Activated CD4-positive, alpha-beta memory T cell treated with anti-CD3 and anti-CD28 coated beads for 36 hours (primary cell): ENCODE measurements at regions of chr20 and their contacts with region 1.

Region 1: GRCh38 chr20:53149148-53149889 is 177.2 kb downstream of the TSHZ2 start:
- DNase-seq: no peak
- H3K4me3 Mint-ChIP-seq: no peak overlapping the region
- H3K27ac Mint-ChIP-seq: no peak overlapping the region
- H3K4me1 Mint-ChIP-seq: peaks cover 54% of the 10 kb centered on the region
- H3K27me3 Mint-ChIP-seq: no peaks in the 10 kb centered on the region

Region 2: GRCh38 chr20:52410182-52410647 is 739.1 kb before region 1 on chr20:
- CTCF ChIA-PET with region 1: no interaction called
- POLR2A ChIA-PET with region 1: no interaction called
- intact Hi-C with region 1: loop called (anchors 5 kb)
- DNase-seq: peak; percentile 65
- H3K4me3 Mint-ChIP-seq: peak overlapping the region; percentile 38
- H3K27ac Mint-ChIP-seq: peak overlapping the region; percentile 63
- H3K4me1 Mint-ChIP-seq: peaks cover 64% of the 10 kb centered on the region
- H3K27me3 Mint-ChIP-seq: no peaks in the 10 kb centered on the region

Region 3: DNA sequence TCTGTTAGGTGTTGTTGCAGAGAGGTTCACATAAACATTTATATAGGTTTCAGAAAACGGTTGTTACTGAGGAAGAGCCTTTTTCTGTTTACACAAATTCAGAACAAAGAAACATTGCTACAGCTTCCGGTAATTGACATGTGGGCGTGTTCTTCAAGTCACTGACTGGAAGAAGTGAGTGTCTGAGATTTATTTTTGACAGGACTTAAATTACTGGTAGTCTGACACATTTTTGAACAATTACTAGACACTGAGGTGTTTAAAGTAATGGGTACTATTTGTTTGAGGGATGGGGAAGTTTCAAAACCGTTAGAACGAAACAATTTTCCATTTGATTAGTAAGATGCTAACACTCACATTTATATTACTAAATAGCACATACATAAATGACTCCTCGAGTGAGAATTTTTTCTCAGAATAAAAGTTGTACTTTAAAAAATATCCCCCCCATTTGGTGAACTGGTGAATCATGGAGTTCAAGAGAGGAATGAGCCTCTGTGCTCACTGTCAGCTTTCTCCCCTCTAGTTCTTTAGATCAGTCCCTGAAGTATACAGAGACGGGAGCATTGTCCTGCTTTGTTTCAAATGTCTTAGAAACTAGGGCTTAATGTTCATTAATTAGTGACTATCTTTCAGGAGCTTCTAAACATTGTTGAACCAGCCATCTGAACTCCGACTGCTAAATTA is 78.5 kb before region 1 on chr20:
- CTCF ChIA-PET with region 1: no interaction called
- POLR2A ChIA-PET with region 1: interaction called, 14 read pairs
- intact Hi-C with region 1: loop called (anchors 1 kb)
- DNase-seq: peak; percentile 47
- H3K4me3 Mint-ChIP-seq: peak overlapping the region; percentile 18
- H3K27ac Mint-ChIP-seq: peak overlapping the region; percentile 93
- H3K4me1 Mint-ChIP-seq: peaks cover 56% of the 10 kb centered on the region
- H3K27me3 Mint-ChIP-seq: no peaks in the 10 kb centered on the region

Region 4: DNA sequence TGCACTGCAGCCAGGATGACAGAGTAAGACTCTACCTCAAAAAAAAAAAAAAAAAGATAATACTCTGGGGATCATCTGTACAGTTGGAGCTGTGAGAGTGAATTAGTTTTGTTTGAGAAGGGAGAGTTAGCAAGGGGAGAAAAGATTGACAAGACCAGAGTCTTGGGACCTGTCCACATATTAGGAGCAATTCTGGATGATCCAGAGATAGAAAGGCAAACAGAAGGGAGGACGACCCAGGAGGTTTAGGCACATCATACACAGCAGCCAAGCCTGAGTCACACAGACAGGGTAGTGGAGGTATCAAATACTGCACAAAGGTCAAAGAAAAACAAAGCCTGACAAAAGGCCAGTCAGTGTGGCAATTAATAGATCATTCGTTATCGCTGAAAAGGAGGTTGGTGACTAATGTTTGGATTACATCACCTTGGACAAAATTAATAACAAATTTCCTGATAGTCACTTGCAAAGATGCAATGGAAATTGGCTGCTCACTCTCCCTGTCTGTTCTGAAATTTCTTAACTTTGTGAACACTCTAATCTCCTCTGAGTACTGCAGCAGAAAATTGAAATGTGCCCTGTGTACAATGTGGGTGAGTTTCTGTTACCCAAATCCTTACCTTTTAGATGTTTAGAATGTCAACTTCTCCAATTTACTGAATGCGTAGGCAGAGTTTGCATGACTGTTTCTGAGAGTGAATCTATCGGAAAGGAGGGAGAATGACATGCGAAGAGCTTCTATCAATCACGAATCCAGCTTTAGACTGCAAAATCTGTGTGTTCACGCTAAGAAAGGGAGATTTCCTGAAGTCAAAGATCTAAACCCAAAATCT is 71.7 kb before region 1 on chr20:
- CTCF ChIA-PET with region 1: interaction called, 3 read pairs
- POLR2A ChIA-PET with region 1: interaction called, 15 read pairs
- intact Hi-C with region 1: loop called (anchors 1 kb)
- DNase-seq: peak; percentile 51
- H3K4me3 Mint-ChIP-seq: no peak overlapping the region
- H3K27ac Mint-ChIP-seq: no peak overlapping the region
- H3K4me1 Mint-ChIP-seq: peaks cover 47% of the 10 kb centered on the region
- H3K27me3 Mint-ChIP-seq: no peaks in the 10 kb centered on the region

Region 5: DNA sequence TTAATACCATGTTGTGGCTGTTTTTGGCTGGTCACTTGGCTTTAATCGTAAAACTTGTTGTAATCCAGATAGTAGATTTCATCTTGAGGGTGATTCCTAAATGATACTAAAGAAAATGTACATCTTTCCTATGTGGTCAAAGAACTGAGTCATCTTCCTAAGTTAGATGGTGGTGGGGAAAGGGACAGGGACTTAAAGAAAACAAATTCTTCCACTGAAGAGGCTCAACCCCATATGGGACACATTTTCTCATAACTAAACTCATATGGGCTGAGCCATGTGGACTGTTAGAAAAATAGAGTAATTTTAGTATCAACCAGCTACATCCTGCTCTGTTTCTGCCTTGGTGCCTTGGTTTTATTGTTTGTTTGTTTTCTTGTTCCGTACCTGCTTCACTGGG is 21.3 kb before region 1 on chr20:
- CTCF ChIA-PET with region 1: no interaction called
- POLR2A ChIA-PET with region 1: no interaction called
- intact Hi-C with region 1: loop called (anchors 1 kb)
- DNase-seq: no peak
- H3K4me3 Mint-ChIP-seq: no peak overlapping the region
- H3K27ac Mint-ChIP-seq: peak overlapping the region; percentile 64
- H3K4me1 Mint-ChIP-seq: peaks cover 41% of the 10 kb centered on the region
- H3K27me3 Mint-ChIP-seq: no peaks in the 10 kb centered on the region

Region 6: DNA sequence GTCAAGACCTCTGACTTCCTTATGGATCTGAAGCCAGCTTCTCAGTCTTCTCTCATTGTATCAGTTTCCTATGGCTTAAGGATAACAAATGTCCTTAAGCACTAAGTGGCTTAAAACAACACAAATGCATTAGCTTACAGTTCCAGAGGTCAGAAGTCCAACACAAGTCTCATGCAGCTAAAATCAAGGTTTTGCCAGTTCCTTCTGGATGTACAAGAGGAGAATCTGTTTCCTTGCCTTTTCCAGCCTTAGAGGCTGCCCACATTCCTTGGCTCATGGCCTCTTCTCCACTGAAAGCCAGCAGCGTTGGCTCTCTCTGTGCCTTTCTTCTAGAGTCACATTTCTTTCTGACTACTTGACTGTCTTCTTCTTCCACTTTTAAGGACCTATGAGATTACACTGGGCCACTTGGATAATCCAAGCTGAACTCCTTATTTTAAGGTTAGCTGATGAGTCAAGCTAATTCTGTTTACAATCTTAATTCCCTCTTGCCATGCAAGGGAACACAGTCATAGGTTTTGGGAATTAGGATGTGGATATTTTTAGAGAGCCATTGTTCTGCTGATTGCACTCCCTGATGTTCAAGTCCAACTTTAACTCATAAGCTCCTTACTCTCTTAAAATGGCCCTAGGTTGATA is 742.1 kb after region 1 on chr20:
- CTCF ChIA-PET with region 1: no interaction called
- POLR2A ChIA-PET with region 1: no interaction called
- intact Hi-C with region 1: loop called (anchors 1 kb)
- DNase-seq: no peak
- H3K4me3 Mint-ChIP-seq: no peak overlapping the region
- H3K27ac Mint-ChIP-seq: no peak overlapping the region
- H3K4me1 Mint-ChIP-seq: peaks cover 30% of the 10 kb centered on the region
- H3K27me3 Mint-ChIP-seq: no peaks in the 10 kb centered on the region